BJ (cell line): ENCODE measurements at regions of chr7 and their contacts with region 1.

Region 1: DNA sequence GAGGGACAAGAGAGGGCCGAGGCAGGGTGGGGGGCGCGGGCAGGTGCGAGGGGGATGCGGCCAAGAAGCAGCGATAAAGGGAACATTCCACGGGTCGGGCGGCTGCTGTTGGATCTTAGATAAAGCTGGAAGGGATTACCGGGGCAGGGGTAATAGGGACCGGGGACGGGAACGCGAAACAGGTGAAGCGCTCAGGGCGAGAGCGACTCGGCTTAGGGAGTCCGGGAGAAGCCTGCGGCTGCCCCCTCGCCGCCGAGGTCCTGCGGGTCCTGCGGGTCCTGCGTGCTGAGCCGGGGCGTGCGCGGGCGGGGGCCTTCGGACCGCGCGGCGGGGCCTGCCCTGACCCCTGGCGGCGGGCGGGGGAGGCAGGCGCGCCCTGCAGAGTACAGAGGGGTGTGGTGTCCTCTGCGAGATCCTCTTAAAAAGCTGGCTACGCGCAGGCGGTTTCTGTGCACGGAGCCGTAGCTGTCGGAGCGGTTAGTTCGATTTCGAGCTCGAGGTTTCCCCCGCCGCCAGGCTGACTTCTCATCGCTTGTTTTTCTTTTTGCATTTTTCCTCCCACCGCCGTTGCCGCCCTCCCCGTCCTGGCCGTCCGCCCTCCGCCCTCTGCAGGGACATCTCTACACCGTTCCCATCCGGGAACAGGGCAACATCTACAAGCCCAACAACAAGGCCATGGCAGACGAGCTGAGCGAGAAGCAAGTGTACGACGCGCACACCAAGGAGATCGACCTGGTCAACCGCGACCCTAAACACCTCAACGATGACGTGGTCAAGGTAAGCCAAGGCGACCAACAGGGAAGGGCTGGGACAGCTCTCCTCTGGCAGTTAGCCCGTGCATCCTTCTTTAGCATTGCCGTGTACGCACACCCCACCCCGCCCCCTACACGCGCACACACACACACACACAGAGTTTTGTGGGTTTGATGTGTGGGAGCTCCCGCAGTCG is 1.4 kb downstream of the CAV1 start:
- DNase-seq: no peak
- H3K4me3 ChIP-seq: peak overlapping the region; percentile 73
- H3K27me3 ChIP-seq: no peaks in the 10 kb centered on the region
- CTCF ChIP-seq: peak; percentile 58

Region 2: DNA sequence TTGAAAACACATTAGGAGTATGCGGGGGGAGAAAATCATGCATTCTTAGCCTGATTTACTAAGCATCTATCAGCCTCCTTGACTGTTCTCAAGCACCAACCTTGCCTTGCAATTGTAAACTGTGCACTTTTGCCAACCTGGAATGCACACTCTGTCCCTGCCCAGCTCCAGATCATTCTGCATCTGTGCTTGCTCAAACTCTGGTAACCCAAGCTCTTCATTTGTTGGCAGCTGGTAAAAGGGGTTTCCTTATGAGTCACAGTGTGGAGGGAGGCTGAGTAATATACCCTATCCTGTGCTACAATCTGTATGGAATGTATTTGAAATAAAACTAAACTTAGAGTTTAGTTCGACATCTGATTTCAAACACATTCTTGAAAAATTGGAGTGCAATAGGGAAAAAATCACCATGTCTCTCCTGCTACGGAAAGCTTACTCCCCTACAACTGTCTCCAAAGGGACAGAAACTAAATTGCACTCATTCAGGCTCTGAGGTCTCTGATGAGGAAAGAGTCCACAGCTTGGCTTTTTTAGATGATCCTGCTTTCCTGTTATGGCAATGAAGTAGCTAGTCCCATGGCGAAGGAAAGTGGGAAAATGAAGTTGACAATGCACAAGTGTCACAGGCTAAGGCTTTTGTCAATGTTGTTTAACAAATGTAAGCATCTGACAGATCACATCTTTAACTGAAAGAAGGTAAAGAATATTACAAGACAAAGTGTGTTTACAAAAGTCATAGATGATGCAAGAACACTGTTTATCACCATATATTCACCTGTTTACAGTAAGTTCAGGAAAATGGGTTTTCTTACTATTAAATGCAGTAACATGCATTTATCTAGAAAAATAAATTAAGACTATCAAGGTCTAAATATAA is 254.0 kb before region 1 on chr7:
- CTCF ChIA-PET with region 1: interaction called, 14 read pairs
- POLR2A ChIA-PET with region 1: interaction called, 5 read pairs
- DNase-seq: peak; percentile 85
- H3K4me3 ChIP-seq: peak overlapping the region; percentile 14
- H3K27me3 ChIP-seq: no peaks in the 10 kb centered on the region
- CTCF ChIP-seq: no peak

Region 3: GRCh38 chr7:116434820-116435341 is 91.3 kb before region 1 on chr7:
- CTCF ChIA-PET with region 1: interaction called, 18 read pairs
- POLR2A ChIA-PET with region 1: interaction called, 4 read pairs
- DNase-seq: peak; percentile 97
- H3K4me3 ChIP-seq: no peak overlapping the region
- H3K27me3 ChIP-seq: no peaks in the 10 kb centered on the region
- CTCF ChIP-seq: no peak

Region 4: GRCh38 chr7:116495737-116496136 is 30.4 kb before region 1 on chr7:
- CTCF ChIA-PET with region 1: interaction called, 13 read pairs
- POLR2A ChIA-PET with region 1: interaction called, 3 read pairs
- DNase-seq: no peak
- H3K4me3 ChIP-seq: no peak overlapping the region
- H3K27me3 ChIP-seq: no peaks in the 10 kb centered on the region
- CTCF ChIP-seq: no peak

Region 5: DNA sequence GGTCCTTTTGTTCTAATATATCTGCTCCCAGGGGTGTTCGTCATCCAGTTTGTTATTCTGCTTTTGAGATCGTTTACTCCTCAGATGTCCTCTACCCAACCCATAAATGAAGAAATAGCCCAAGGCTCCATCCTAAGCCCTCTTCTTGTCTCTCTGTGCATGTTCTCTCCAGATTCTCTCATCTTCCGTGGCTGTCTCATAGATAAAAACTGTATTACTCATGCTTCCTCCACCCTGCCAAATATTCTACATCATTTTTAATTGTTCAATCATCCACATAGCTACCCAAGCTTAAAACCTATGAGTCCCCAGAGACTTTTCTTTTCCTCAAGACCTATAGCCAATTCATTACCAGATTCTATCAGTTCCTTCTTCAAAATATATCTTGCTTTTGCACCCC is 43.5 kb after region 1 on chr7:
- CTCF ChIA-PET with region 1: interaction called, 14 read pairs
- POLR2A ChIA-PET with region 1: interaction called, 3 read pairs
- DNase-seq: peak; percentile 94
- H3K4me3 ChIP-seq: no peak overlapping the region
- H3K27me3 ChIP-seq: no peaks in the 10 kb centered on the region
- CTCF ChIP-seq: no peak

Region 6: GRCh38 chr7:116588641-116589594 is 62.7 kb after region 1 on chr7:
- CTCF ChIA-PET with region 1: interaction called, 34 read pairs
- POLR2A ChIA-PET with region 1: no interaction called
- DNase-seq: no peak
- H3K4me3 ChIP-seq: no peak overlapping the region
- H3K27me3 ChIP-seq: no peaks in the 10 kb centered on the region; the same call in 1 of the 2 replicates
- CTCF ChIP-seq: no peak

Region 7: DNA sequence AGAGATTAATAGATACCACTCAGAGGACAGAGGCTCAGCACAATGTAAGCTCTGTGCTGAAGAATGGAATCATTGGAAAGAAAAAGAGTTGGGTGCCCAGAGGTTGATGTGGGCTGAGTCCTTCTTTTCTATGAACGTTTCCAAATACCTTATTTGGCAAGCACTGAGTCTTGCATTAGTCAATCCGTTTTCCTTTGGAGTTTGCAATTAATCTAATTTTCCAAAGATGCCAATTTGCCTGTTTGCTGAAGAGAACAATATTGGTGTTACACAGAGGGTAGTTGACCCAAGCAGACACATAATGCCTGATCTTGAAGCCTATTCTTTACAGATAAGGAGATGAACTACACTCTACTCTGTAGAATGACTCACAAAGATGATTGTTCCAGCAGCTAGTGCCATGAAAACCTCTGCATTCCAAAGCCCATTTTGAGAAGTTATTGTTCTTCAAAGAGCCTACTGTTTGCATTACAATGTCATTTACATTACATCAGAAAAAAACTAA is 90.4 kb after region 1 on chr7:
- CTCF ChIA-PET with region 1: no interaction called
- POLR2A ChIA-PET with region 1: no interaction called
- DNase-seq: no peak
- H3K4me3 ChIP-seq: no peak overlapping the region
- H3K27me3 ChIP-seq: no peaks in the 10 kb centered on the region; the same call in 1 of the 2 replicates
- CTCF ChIP-seq: no peak